ENCODE measurements at regions of chr18 and their contacts with region 1.

Region 1: DNA sequence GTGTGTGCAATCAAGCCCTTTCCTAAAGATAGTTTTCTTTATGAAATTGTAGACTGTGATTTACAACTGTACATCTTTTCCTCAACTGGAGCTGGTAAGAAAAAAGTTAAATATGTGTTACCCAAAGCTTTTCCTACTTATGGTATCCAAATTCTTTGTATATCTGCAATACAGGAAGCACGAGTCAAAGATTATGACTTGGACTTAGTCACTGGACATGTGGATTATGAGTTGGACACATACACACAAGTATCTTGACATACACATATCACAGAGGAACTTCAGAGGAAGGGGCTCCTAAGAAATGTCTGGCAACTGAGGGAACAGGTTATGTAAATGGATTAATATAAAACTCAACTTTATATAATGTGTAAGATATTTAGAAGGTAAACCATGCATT is 35.2 kb downstream of the PRELID3A start:
- DNase-seq: no peak
- H3K4me3 ChIP-seq: no peak overlapping the region
- CTCF ChIP-seq: no peak

Region 2: GRCh38 chr18:12278741-12279682 is 163.9 kb before region 1 on chr18:
- in situ Hi-C with region 1: no loop called
- DNase-seq: peak; percentile 84
- H3K4me3 ChIP-seq: peak overlapping the region; percentile 36
- CTCF ChIP-seq: no peak

Region 3: DNA sequence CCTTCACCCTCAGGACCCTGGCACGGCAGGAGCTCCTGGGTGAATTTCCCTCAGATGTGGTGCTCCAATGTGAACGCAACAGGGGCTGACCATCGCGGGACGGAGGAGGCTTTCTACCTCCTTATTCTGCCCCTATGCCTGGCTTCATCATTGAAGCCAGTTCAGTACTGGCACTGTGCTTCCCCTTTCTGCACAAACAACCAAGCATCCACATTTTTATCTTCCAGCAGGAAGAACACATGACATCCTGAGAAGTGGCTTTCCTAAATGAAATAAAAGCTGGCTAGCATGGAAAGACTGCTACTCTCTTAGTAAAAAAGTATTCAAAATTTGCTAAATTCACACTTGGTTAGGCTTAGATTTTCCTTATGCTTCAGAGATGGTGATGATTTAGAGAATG is 90.8 kb before region 1 on chr18:
- in situ Hi-C with region 1: no loop called
- DNase-seq: no peak
- H3K4me3 ChIP-seq: no peak overlapping the region
- CTCF ChIP-seq: no peak

Region 4: DNA sequence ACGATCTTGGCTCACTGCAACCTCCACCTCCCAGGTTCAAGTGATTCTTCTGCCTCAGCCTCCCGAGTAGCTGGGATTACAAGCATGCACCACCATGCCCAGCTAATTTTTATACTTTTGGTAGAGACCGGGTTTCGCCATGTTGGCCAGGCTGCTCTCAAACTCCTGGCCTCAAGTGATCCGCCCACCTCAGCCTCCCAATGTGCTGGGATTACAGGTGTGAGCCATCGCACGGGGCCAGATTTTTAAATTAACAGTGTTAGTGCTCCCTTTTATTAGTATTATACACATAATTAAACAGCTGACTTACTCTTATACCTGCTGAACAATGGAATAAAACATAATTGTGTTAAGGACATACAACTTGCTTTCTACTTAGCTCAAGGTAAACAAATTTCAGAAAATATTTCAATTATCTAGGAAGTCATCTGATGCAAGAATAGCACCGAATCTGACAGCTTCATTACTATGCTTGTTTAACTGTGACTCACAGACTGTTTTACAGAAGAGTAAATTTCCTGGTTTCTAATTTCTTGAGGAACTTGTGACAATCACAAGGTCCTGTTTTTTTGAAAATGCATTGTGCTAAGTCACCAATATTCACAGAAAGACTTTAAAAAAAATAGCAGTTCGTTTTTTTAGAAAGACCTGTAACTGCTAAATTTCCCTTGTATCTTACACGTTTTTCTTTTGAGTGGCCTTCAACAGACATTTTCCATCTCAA is 163.8 kb after region 1 on chr18:
- in situ Hi-C with region 1: loop called (anchors 10 kb)
- DNase-seq: no peak
- H3K4me3 ChIP-seq: no peak overlapping the region
- CTCF ChIP-seq: no peak

Measured in astrocyte of the cerebellum (primary cell).